ENCODE measurements at regions of chr10 and their contacts with region 1.

Region 1: DNA sequence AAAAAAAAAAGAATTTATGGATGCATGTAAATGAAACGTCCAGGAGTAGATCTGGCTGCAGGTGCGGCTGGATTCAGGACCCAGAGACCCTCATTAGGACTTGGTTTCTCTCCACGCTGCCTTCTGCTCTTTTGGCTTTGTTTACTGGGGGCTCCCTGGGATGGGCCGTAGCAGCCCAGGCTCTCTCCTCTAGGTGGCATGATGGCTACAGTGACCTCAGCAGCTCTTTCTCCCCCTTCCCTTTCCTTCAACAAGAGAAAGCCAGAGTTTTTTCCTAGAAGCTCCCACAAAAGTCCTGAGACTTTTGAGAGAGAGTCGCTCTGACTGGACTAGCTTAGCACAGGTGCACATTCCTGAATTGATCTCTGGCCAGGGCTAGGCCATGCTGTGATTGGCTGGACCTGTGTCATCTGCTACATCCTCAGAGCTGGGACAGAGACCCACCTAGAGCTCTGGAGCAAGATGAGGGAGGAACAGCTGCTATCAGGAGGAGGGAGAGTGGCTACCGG is 67.8 kb upstream of the PDCD4 start:
- DNase-seq: peak in 1 of 2 donors; percentile 35
- ATAC-seq: peak in 7 of 8 donors; percentile 60 to 80 (median 69)
- H3K4me3 ChIP-seq: no peak overlapping the region
- H3K27ac ChIP-seq: peak overlapping the region in 6 of 10 donors; percentile 9 to 52 (median 37)
- H3K4me1 ChIP-seq: peaks cover 12 to 62% (median 26%) of the 10 kb centered on the region in 9 donors
- H3K27me3 ChIP-seq: no peaks in the 10 kb centered on the region
- CTCF ChIP-seq: peak; percentile 27 to 74 (median 59)

Region 2: GRCh38 chr10:110864662-110865140 is 60.8 kb after region 1 on chr10:
- intact Hi-C with region 1: loop called in 1 of 10 experiments (anchors 5 kb)
- DNase-seq: no peak
- ATAC-seq: peak in 7 of 8 donors; percentile 22 to 65 (median 36)
- H3K4me3 ChIP-seq: peak overlapping the region in 1 of 10 donors; percentile 36
- H3K27ac ChIP-seq: peak overlapping the region; percentile 22 to 97 (median 63)
- H3K4me1 ChIP-seq: peaks cover 0 to 98% (median 30%) of the 10 kb centered on the region in 9 donors
- H3K27me3 ChIP-seq: no peaks in the 10 kb centered on the region
- CTCF ChIP-seq: no peak

Region 3: GRCh38 chr10:110893559-110894179 is 89.8 kb after region 1 on chr10:
- intact Hi-C with region 1: loop called in 6 of 10 experiments (anchors 5 kb)
- DNase-seq: no peak
- ATAC-seq: peak; percentile 69 to 88 (median 82)
- H3K4me3 ChIP-seq: no peak overlapping the region
- H3K27ac ChIP-seq: no peak overlapping the region
- H3K4me1 ChIP-seq: peaks cover 0 to 18% (median 5%) of the 10 kb centered on the region in 9 donors
- H3K27me3 ChIP-seq: no peaks in the 10 kb centered on the region
- CTCF ChIP-seq: peak; percentile 31 to 76 (median 61)

Measured in heart right ventricle (tissue), 16 donors.